Mammary epithelial cell (primary cell): ENCODE measurements at regions of chr11 and their contacts with region 1.

Region 1: DNA sequence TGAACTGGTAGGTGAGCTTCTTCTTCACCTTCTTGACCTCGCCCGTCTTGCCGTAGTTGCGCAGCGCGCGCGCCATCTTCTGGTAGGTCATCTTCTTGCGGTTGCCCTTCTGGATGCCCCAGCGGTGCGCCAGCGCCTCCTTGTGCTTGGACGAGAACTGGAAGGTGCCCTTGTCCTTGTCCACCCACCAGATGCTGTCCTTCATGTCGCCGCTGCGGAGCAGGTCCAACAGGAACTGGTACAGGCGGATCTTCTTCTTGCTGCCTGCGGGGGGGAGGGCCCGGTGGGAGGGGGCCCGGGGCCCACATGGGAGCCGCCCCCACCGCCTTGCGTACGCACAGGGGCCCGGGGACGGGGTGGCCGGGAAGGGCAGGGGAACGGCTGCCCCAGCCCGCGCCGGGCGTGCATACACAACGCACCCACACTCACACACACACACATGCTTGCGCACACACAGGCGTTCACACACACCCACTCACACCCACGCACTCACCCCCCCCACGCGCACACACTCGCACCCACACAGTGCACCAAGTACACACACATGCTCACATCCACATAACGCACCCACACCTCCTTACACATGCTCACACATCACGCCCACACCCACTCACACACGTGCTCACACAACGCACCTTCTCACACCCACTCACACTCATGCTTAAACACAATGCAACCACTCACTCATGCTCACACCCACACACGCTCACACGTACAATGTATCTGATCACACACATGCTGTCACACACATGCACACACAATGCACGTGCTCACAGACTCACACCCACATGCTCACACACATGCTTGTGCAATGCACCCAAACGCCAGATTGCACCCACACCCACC is 3.0 kb upstream of the MYBPC3 start:
- DNase-seq: peak; percentile 78
- H3K4me3 ChIP-seq: peak overlapping the region in 1 of 3 experiments; percentile 34
- H3K27ac ChIP-seq: no peak overlapping the region
- H3K4me1 ChIP-seq: peaks cover 5% of the 10 kb centered on the region
- H3K27me3 ChIP-seq: no peaks in the 10 kb centered on the region
- CTCF ChIP-seq: peak; percentile 98 to 100

Region 2: GRCh38 chr11:46537537-46538295 is 817.8 kb before region 1 on chr11:
- CTCF ChIA-PET with region 1: no interaction called
- dilution Hi-C with region 1: no loop called
- in situ Hi-C with region 1: no loop called
- intact Hi-C with region 1: no loop called
- DNase-seq: peak; percentile 76
- H3K4me3 ChIP-seq: no peak overlapping the region
- H3K27ac ChIP-seq: peak overlapping the region; percentile 19
- H3K4me1 ChIP-seq: peaks cover 5% of the 10 kb centered on the region
- H3K27me3 ChIP-seq: no peaks in the 10 kb centered on the region
- CTCF ChIP-seq: peak; percentile 98 to 99

Region 3: GRCh38 chr11:46889689-46890475 is 465.6 kb before region 1 on chr11:
- CTCF ChIA-PET with region 1: no interaction called
- dilution Hi-C with region 1: no loop called
- in situ Hi-C with region 1: loop called in 1 of 2 experiments (anchors 10 kb)
- intact Hi-C with region 1: loop called (anchors 1 kb)
- DNase-seq: peak; percentile 55
- H3K4me3 ChIP-seq: no peak overlapping the region
- H3K27ac ChIP-seq: no peak overlapping the region
- H3K4me1 ChIP-seq: no peaks in the 10 kb centered on the region
- H3K27me3 ChIP-seq: no peaks in the 10 kb centered on the region
- CTCF ChIP-seq: peak; percentile 89

Region 4: GRCh38 chr11:47161134-47161854 is 194.2 kb before region 1 on chr11:
- CTCF ChIA-PET with region 1: no interaction called
- dilution Hi-C with region 1: no loop called
- in situ Hi-C with region 1: no loop called
- intact Hi-C with region 1: loop called (anchors 1 kb)
- DNase-seq: peak; percentile 28
- H3K4me3 ChIP-seq: no peak overlapping the region
- H3K27ac ChIP-seq: no peak overlapping the region
- H3K4me1 ChIP-seq: no peaks in the 10 kb centered on the region
- H3K27me3 ChIP-seq: no peaks in the 10 kb centered on the region
- CTCF ChIP-seq: peak; percentile 61 to 77

Region 5: GRCh38 chr11:47176328-47177228 is 178.9 kb before region 1 on chr11 and contains the start of gene ARFGAP2:
- CTCF ChIA-PET with region 1: no interaction called
- dilution Hi-C with region 1: no loop called
- in situ Hi-C with region 1: loop called in 1 of 2 experiments (anchors 10 kb)
- intact Hi-C with region 1: loop called (anchors 1 kb)
- DNase-seq: peak; percentile 96
- H3K4me3 ChIP-seq: peak within 1 kb of the TSS; percentile 77 to 89 (median 87)
- H3K27ac ChIP-seq: peak within 1 kb of the TSS; percentile 84
- H3K4me1 ChIP-seq: peaks cover 18% of the 10 kb centered on the region
- H3K27me3 ChIP-seq: no peaks in the 10 kb centered on the region
- CTCF ChIP-seq: no peak
- total RNA-seq, gene ARFGAP2: 83.0 to 120 TPM

Region 6: GRCh38 chr11:47233989-47234668 is 121.4 kb before region 1 on chr11:
- CTCF ChIA-PET with region 1: no interaction called
- dilution Hi-C with region 1: no loop called
- in situ Hi-C with region 1: no loop called
- intact Hi-C with region 1: loop called (anchors 1 kb)
- DNase-seq: peak; percentile 52
- H3K4me3 ChIP-seq: no peak overlapping the region
- H3K27ac ChIP-seq: peak overlapping the region; percentile 2
- H3K4me1 ChIP-seq: peaks cover 19% of the 10 kb centered on the region
- H3K27me3 ChIP-seq: no peaks in the 10 kb centered on the region
- CTCF ChIP-seq: peak in 1 of 2 donors; percentile 34

Region 7: GRCh38 chr11:47248664-47249377 is 106.7 kb before region 1 on chr11 and contains the start of gene ACP2:
- CTCF ChIA-PET with region 1: no interaction called
- dilution Hi-C with region 1: no loop called
- in situ Hi-C with region 1: no loop called
- intact Hi-C with region 1: loop called (anchors 5 kb)
- DNase-seq: peak; percentile 81
- H3K4me3 ChIP-seq: peak within 1 kb of the TSS; percentile 79 to 88 (median 80)
- H3K27ac ChIP-seq: peak within 1 kb of the TSS; percentile 64
- H3K4me1 ChIP-seq: peaks cover 9% of the 10 kb centered on the region
- H3K27me3 ChIP-seq: no peaks in the 10 kb centered on the region
- CTCF ChIP-seq: peak in 1 of 2 donors; percentile 31
- total RNA-seq, gene ACP2: 24.0 to 34.2 TPM

Region 8: DNA sequence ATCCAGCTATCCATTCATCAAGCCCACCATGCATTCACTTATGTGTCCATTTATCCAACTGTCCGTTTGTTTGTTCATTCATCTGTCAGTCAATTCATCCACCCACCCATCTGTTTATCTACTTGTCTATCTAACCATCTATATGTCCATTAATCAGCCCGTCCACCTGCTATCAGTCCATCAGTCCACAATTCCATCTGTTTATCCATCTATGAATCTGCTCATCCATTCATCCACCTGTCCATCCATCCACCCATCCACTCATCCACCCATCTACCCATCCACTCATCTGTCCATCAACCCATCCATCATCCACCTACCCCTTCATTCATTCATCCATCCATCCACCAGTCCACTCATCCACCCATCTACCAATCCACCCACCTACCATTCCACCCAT is 23.8 kb after region 1 on chr11:
- CTCF ChIA-PET with region 1: interaction called, 10 read pairs
- dilution Hi-C with region 1: no loop called
- in situ Hi-C with region 1: no loop called
- intact Hi-C with region 1: no loop called
- DNase-seq: no peak
- H3K4me3 ChIP-seq: no peak overlapping the region
- H3K27ac ChIP-seq: no peak overlapping the region
- H3K4me1 ChIP-seq: peaks cover 4% of the 10 kb centered on the region
- H3K27me3 ChIP-seq: no peaks in the 10 kb centered on the region
- CTCF ChIP-seq: no peak

Region 9: DNA sequence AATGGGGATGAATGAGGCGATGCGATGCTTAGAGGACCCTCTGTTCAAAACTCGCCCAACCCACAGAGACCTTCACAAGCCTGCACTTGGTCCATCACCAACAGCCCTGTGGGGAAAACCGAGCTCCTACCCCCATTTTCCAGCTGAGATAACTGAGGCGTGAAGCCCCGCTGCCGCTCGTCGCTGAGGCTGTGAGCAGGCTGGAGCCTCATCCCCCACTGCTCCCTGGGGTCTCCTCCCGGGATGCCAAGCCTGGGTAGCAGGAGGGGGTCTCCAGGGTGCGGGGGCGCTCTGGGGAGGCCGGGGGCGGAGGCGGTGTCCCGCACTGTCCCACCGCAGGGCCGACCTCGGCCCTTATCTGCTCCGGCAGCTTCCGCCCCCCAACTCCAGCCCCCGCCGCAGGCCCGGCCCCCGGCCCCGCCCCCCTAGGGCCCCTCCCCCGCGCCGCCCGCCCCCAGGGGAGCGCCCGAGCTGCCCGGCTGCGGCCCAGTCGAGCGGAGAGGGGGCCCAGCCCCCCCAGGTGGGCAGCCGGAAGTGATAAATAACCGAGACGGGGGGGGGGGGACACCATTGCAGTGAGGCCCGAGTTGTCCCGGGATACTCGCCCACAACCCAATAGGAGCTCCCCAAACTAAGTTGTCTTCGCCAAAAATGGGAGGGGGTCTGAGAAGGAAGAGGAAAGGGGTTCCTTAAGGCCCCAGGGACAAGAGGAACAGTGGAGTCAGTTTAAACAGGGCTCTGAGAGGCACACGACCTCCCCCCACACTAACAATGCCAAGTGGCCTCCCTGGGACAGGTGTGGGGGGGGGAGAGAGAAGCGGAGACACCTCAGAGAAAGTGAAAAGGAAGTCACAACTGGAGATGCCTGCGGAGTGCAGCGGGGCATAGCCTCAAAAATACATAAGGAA is 44.6 kb after region 1 on chr11:
- CTCF ChIA-PET with region 1: no interaction called
- dilution Hi-C with region 1: no loop called
- in situ Hi-C with region 1: no loop called
- intact Hi-C with region 1: no loop called
- DNase-seq: no peak
- H3K4me3 ChIP-seq: peak overlapping the region in 2 of 3 experiments; percentile 16 to 30
- H3K27ac ChIP-seq: no peak overlapping the region
- H3K4me1 ChIP-seq: peaks cover 19% of the 10 kb centered on the region
- H3K27me3 ChIP-seq: no peaks in the 10 kb centered on the region
- CTCF ChIP-seq: no peak